Prostate gland (tissue), 2 donors: ENCODE measurements at regions of chr1 and their contacts with region 1.

Region 1: DNA sequence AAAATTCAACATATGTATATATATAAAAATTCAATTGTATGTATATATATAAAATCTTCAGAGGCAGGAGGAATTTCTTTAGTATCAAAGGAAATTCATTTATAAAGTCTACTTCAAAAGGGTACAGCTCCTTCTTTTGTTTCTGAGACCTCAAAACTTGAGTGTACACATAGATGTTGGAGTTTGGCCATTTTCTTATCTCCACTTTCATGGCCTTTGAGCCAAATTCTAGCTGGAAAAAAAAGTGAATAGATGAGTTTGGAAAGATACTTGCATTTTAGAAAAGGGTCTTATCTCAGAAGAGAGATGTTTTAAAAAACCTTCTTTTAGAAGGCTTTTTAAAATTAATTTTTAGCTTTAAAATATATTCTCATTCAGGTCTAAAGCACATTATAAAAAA is 103.2 kb downstream of the ATF6 start:
- DNase-seq: no peak
- H3K4me3 ChIP-seq: no peak overlapping the region
- H3K27ac ChIP-seq: no peak overlapping the region
- H3K4me1 ChIP-seq: no peaks in the 10 kb centered on the region
- H3K27me3 ChIP-seq: no peaks in the 10 kb centered on the region
- CTCF ChIP-seq: no peak
- POLR2A ChIP-seq: no peak

Region 2: DNA sequence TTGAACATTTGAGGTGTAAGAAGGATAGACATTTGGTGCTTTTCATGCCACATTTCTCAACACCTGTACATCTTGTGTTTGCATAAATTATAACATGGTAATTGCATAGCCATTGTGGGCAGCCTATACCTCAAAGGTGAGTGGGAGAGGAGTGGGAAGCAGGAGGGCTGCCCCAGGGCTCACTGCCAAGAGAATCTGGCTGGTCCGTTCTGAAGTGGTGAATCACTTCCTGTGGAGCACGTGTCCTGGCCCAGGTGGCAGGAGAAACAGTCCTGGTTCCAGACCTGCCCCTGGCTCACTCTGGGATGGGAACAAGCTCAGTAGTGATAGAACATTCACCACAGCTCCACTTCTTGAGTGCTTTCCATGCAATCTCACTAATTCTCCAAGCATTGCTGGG is 165.9 kb after region 1 on chr1:
- intact Hi-C with region 1: loop called (anchors 5 kb)
- DNase-seq: no peak
- H3K4me3 ChIP-seq: no peak overlapping the region
- H3K27ac ChIP-seq: no peak overlapping the region
- H3K4me1 ChIP-seq: no peaks in the 10 kb centered on the region
- H3K27me3 ChIP-seq: no peaks in the 10 kb centered on the region
- CTCF ChIP-seq: no peak
- POLR2A ChIP-seq: no peak

Region 3: GRCh38 chr1:162391790-162392563 is 522.7 kb after region 1 on chr1:
- intact Hi-C with region 1: no loop called
- DNase-seq: peak; percentile 31
- H3K4me3 ChIP-seq: no peak overlapping the region
- H3K27ac ChIP-seq: no peak overlapping the region
- H3K4me1 ChIP-seq: no peaks in the 10 kb centered on the region
- H3K27me3 ChIP-seq: no peaks in the 10 kb centered on the region
- CTCF ChIP-seq: peak; percentile 26 to 86 (median 76)
- POLR2A ChIP-seq: no peak